Natural killer cell (primary cell): ENCODE measurements at regions of chr6 and their contacts with region 1.

Region 1: DNA sequence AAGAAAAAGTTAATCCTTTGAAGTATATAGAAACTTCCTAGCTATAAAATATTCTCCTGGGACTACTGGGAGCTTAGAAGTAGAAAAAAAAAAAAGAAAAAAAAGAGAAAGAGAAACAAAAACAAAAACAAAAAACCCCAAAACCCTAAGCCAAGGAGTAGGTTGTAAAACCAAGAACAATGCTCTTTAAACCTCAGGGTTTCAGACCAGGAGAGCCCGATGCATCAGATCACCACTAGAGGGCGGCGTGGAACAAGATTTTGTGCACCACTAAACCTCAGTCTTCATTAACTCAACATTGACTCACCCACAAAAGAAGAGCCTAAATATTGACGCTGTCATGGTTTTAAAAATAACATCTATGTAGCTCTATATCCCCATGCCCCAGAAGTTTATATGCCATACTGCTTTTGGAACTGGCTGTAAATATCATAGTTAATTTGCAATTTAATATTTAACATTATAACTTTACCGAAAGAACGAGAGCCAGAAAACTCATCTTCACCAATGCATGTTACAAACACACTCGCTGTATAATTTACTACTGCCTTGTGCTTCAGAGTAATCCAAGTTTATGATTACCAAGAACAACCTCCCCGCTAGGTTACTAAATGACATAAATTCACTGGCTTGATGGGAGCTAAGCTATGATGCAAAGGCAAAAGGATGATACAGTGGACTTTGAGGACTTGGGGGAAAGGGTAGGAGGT is 19.2 kb downstream of the MCUR1 start:
- DNase-seq: peak; percentile 71 to 88
- ATAC-seq: peak; percentile 92 to 99 (median 98)
- H3K4me3 ChIP-seq: no peak overlapping the region
- H3K4me3 Mint-ChIP-seq: no peak overlapping the region
- H3K27ac ChIP-seq: no peak overlapping the region
- H3K27ac Mint-ChIP-seq: no peak overlapping the region
- H3K4me1 ChIP-seq: no peaks in the 10 kb centered on the region
- H3K4me1 Mint-ChIP-seq: peaks cover 0 to 8% of the 10 kb centered on the region in 2 donors
- H3K27me3 ChIP-seq: no peaks in the 10 kb centered on the region
- H3K27me3 Mint-ChIP-seq: no peaks in the 10 kb centered on the region
- CTCF ChIP-seq: peak; percentile 92

Region 2: GRCh38 chr6:13924146-13924948 is 129.2 kb after region 1 on chr6:
- intact Hi-C with region 1: no loop called
- DNase-seq: peak in 1 of 2 donors; percentile 24
- ATAC-seq: peak; percentile 28 to 80 (median 47)
- H3K4me3 ChIP-seq: peak overlapping the region; percentile 22
- H3K4me3 Mint-ChIP-seq: peak overlapping the region; percentile 78
- H3K27ac ChIP-seq: no peak overlapping the region
- H3K27ac Mint-ChIP-seq: peak overlapping the region in 1 of 2 donors; percentile 72
- H3K4me1 ChIP-seq: peaks cover 16% of the 10 kb centered on the region
- H3K4me1 Mint-ChIP-seq: peaks cover 7 to 15% of the 10 kb centered on the region in 2 donors
- H3K27me3 ChIP-seq: peaks cover 49% of the 10 kb centered on the region
- H3K27me3 Mint-ChIP-seq: peaks cover 52 to 72% of the 10 kb centered on the region in 2 donors
- CTCF ChIP-seq: no peak

Region 3: GRCh38 chr6:13965582-13966127 is 170.5 kb after region 1 on chr6:
- intact Hi-C with region 1: no loop called
- DNase-seq: no peak
- ATAC-seq: no peak
- H3K4me3 ChIP-seq: no peak overlapping the region
- H3K4me3 Mint-ChIP-seq: no peak overlapping the region
- H3K27ac ChIP-seq: no peak overlapping the region
- H3K27ac Mint-ChIP-seq: no peak overlapping the region
- H3K4me1 ChIP-seq: no peaks in the 10 kb centered on the region
- H3K4me1 Mint-ChIP-seq: no peaks in the 10 kb centered on the region
- H3K27me3 ChIP-seq: peaks cover 5% of the 10 kb centered on the region
- H3K27me3 Mint-ChIP-seq: peaks cover 17 to 39% of the 10 kb centered on the region in 2 donors
- CTCF ChIP-seq: no peak

Region 4: DNA sequence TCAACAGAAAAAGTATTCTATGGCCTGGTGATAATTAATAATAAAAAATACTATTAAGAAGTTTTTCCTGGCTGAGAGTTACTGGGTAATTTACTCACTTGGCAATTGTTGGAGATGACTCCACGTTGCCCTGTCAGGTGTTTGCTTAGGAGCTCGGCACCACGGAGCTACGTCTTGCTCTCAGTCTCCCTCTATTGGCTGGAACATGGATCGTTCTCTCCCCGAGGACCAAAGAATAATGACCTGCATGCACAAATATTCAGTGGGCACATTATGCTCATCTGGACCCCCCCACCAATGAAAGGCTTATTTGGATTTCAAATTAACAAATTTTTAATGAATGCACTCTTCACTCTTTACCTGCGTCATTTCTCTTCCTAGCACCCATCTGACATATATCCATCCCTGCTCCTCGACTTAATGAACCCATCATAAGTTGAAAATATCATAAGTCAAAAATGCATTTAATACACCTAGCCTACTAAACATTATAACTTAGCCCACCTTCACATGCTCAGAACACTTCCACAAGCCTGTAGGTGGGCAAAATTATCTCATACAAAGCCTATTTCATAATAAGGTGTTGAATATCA is 251.4 kb after region 1 on chr6:
- intact Hi-C with region 1: loop called (anchors 5 kb)
- DNase-seq: peak in 1 of 2 donors; percentile 74
- ATAC-seq: peak; percentile 67 to 85 (median 75)
- H3K4me3 ChIP-seq: no peak overlapping the region
- H3K4me3 Mint-ChIP-seq: no peak overlapping the region
- H3K27ac ChIP-seq: no peak overlapping the region
- H3K27ac Mint-ChIP-seq: no peak overlapping the region
- H3K4me1 ChIP-seq: no peaks in the 10 kb centered on the region
- H3K4me1 Mint-ChIP-seq: no peaks in the 10 kb centered on the region
- H3K27me3 ChIP-seq: no peaks in the 10 kb centered on the region
- H3K27me3 Mint-ChIP-seq: peaks cover 15 to 27% of the 10 kb centered on the region in 2 donors
- CTCF ChIP-seq: peak; percentile 59

Region 5: DNA sequence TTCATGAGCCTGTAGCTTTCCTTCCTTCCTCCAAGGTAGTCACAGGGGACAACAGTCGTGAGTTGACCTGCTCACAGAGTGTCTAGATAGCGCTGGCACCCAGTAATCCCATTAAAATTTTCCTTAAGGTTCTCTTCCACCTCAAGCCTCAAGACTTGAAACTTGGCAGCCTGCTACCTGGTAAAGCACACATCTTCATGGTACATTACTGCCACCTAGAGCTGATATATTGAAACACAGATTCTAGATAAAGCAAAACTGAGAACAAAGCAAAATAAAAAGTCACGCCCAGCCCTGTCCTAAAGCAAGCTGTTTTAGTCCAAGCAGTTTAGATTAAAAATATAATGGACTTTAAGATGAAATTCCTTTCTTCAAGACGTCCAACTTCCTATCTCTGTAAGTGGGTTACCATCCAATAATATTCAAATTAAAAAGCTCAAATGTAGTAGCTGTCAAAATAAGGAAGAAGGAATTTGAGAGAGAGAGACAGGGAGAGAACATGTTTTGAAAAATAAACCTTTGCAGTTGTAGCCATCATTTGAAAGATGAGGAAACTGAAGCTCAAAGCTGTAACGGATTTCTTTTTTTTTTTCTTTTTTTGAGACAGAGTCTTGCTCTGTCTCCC is 271.7 kb after region 1 on chr6:
- intact Hi-C with region 1: loop called (anchors 1 kb)
- DNase-seq: peak in 1 of 2 donors; percentile 78
- ATAC-seq: peak; percentile 77 to 90 (median 83)
- H3K4me3 ChIP-seq: no peak overlapping the region
- H3K4me3 Mint-ChIP-seq: no peak overlapping the region
- H3K27ac ChIP-seq: no peak overlapping the region
- H3K27ac Mint-ChIP-seq: no peak overlapping the region
- H3K4me1 ChIP-seq: no peaks in the 10 kb centered on the region
- H3K4me1 Mint-ChIP-seq: peaks cover 7 to 10% of the 10 kb centered on the region in 2 donors
- H3K27me3 ChIP-seq: no peaks in the 10 kb centered on the region
- H3K27me3 Mint-ChIP-seq: peaks cover 12 to 27% of the 10 kb centered on the region in 2 donors
- CTCF ChIP-seq: peak; percentile 67

Region 6: GRCh38 chr6:14144678-14145113 is 349.5 kb after region 1 on chr6:
- intact Hi-C with region 1: loop called (anchors 1 kb)
- DNase-seq: peak; percentile 64 to 86
- ATAC-seq: peak; percentile 79 to 95 (median 86)
- H3K4me3 ChIP-seq: no peak overlapping the region
- H3K4me3 Mint-ChIP-seq: peak overlapping the region; percentile 26
- H3K27ac ChIP-seq: no peak overlapping the region
- H3K27ac Mint-ChIP-seq: peak overlapping the region; percentile 23 to 50
- H3K4me1 ChIP-seq: peaks cover 3% of the 10 kb centered on the region
- H3K4me1 Mint-ChIP-seq: peaks cover 5 to 7% of the 10 kb centered on the region in 2 donors
- H3K27me3 ChIP-seq: no peaks in the 10 kb centered on the region
- H3K27me3 Mint-ChIP-seq: no peaks in the 10 kb centered on the region
- CTCF ChIP-seq: peak; percentile 97